Activated B cell treated with CpG ODN at 0.5 μM for 24 hours (primary cell): ENCODE measurements at regions of chr2 and their contacts with region 1.

Region 1: DNA sequence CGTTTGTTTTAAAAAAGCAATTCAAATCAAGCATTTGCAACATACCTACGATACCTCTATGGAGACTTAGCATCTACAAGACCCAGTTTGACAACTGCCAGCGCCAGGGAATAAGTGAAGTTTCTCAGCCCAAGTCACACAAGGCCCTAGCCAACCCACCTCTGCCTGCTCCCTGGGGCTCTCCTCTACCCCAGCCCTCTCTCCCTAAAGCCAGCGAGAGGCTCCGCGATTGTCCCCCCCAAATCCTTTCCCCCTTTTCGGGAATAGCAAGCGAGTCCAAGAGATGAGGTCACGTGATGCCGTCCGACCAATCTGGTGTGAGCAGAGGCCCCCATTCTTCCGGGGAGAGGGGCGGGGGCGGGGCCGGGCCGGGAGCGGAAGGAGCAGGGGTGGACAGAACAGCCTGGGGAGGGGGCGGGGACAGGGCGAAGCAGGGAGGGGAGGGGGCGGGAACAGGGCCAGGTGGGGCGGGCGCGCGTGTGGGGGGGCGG is 102.1 kb upstream of the RAB6C start:
- DNase-seq: peak; percentile 71
- ATAC-seq: peak; percentile 94
- H3K4me3 Mint-ChIP-seq: peak overlapping the region; percentile 96
- H3K27ac Mint-ChIP-seq: peak overlapping the region; percentile 86
- H3K4me1 Mint-ChIP-seq: peaks cover 13% of the 10 kb centered on the region
- H3K27me3 Mint-ChIP-seq: peaks cover 2% of the 10 kb centered on the region
- CTCF ChIP-seq: no peak

Region 2: DNA sequence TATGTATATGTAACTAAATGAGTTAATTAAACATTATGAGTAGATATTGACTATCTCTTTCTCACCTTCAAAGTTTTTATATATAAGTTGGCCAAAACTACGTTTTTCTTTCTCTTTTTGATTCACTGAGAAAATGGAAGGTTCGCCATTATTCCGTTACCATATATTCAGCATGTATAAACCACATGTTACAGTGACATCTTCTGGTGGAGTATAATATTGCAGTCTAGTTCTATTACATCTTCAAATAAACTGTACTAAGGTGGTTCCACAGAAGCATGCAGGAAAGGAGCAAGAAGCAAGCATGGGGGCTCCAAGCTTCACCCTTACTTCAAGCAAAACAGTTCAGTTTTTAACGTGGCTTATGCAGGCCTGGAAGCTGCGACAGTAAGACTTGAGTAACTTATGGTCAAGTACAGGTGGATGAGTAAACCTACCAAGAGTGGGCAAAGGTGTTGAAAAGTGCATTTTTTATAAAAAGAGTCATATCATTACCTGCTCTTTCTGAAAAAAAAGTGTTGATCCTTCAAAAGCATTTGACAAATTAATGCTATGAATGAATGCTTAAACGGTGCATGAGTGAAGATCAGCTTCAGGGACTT is 27.7 kb before region 1 on chr2:
- CTCF ChIA-PET with region 1: no interaction called
- POLR2A ChIA-PET with region 1: no interaction called
- intact Hi-C with region 1: loop called (anchors 2 kb)
- DNase-seq: no peak
- ATAC-seq: peak; percentile 82
- H3K4me3 Mint-ChIP-seq: no peak overlapping the region
- H3K27ac Mint-ChIP-seq: no peak overlapping the region
- H3K4me1 Mint-ChIP-seq: peaks cover 1% of the 10 kb centered on the region
- H3K27me3 Mint-ChIP-seq: peaks cover 17% of the 10 kb centered on the region
- CTCF ChIP-seq: no peak

Region 3: GRCh38 chr2:130158631-130159030 is 281.3 kb after region 1 on chr2:
- CTCF ChIA-PET with region 1: no interaction called
- POLR2A ChIA-PET with region 1: no interaction called
- intact Hi-C with region 1: loop called (anchors 1 kb)
- DNase-seq: no peak
- ATAC-seq: no peak
- H3K4me3 Mint-ChIP-seq: no peak overlapping the region
- H3K27ac Mint-ChIP-seq: peak overlapping the region; percentile 90
- H3K4me1 Mint-ChIP-seq: peaks cover 33% of the 10 kb centered on the region
- H3K27me3 Mint-ChIP-seq: no peaks in the 10 kb centered on the region
- CTCF ChIP-seq: no peak

Region 4: DNA sequence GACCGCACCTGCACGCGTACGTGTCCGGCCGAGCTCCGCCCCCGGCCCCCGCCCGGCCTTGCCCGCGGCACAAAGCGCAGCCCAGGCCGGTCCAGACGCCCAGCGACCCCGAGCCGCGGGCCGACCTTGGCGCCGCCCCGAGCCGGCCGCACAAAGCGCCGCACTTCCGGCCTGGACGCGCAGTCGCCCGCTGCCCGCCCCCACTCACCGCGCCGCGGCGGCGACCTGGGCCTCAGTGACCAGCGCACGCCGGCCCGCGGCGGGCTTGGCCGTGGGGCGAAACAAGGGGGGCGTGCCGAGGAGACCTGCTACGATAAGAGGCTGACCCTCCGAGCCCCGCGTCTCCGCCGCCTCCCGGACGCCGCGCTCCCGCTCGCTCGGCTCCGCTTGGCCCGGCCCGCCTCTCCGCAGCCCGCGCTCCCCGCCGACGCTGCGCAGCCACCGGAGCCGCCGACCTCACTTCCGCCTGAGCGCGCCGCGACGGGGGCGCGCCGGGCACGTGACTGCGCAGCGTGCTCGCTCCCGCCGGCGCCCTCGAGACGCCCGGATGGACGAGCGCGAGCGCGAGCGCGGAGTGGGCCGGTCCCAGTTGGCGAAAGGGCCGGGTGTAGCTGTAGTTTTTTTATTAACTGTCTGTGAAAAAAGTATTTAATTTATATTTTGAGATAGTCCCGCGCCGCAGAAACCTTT is 1215.8 kb after region 1 on chr2 and contains the start of gene FAM168B:
- CTCF ChIA-PET with region 1: no interaction called
- POLR2A ChIA-PET with region 1: no interaction called
- intact Hi-C with region 1: loop called (anchors 2 kb)
- DNase-seq: peak; percentile 96
- ATAC-seq: peak; percentile 78
- H3K4me3 Mint-ChIP-seq: peak within 1 kb of the TSS; percentile 97
- H3K27ac Mint-ChIP-seq: peak within 1 kb of the TSS; percentile 98
- H3K4me1 Mint-ChIP-seq: peaks cover 22% of the 10 kb centered on the region
- H3K27me3 Mint-ChIP-seq: no peaks in the 10 kb centered on the region
- CTCF ChIP-seq: no peak
- total RNA-seq, gene FAM168B: 59.9 and 62.5 TPM in 2 replicates

Region 5: DNA sequence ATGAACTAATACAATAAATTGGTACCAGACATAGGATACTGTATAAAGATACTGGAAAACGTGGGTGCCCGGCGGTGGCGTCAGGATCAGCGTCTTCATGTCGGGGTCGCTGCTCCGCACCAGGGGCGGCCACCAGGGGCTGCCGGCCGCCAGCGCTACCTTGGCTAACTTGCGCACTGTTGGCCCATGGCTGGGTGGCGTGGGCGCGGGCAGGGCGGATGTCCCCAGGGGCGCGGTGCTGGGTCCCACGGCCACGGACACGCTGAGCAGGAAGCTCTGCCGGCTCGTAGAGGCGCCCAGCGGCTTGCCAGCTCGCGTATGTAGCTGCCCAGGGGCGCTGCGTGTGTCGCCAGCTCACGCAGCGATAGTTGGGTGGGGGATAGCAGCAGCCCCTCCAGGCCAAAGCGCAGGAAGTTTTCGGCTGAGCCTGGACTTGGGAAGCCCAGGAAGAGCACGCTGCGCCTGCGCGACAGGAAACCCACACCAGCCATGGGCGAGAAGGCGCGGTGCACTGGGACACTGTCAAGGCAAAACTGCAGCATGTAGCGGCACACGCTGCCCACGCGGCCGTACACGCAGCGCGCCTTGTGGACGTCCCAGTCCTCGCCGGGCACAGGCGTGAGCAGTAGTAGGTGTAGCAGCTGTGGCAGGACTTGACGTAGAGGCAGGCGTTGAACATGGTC is 1950.3 kb after region 1 on chr2:
- CTCF ChIA-PET with region 1: no interaction called
- POLR2A ChIA-PET with region 1: no interaction called
- intact Hi-C with region 1: no loop called
- DNase-seq: no peak
- ATAC-seq: no peak
- H3K4me3 Mint-ChIP-seq: no peak overlapping the region
- H3K27ac Mint-ChIP-seq: no peak overlapping the region
- H3K4me1 Mint-ChIP-seq: no peaks in the 10 kb centered on the region
- H3K27me3 Mint-ChIP-seq: no peaks in the 10 kb centered on the region
- CTCF ChIP-seq: no peak